ENCODE measurements at regions of chr9 and their contacts with region 1.

Region 1: DNA sequence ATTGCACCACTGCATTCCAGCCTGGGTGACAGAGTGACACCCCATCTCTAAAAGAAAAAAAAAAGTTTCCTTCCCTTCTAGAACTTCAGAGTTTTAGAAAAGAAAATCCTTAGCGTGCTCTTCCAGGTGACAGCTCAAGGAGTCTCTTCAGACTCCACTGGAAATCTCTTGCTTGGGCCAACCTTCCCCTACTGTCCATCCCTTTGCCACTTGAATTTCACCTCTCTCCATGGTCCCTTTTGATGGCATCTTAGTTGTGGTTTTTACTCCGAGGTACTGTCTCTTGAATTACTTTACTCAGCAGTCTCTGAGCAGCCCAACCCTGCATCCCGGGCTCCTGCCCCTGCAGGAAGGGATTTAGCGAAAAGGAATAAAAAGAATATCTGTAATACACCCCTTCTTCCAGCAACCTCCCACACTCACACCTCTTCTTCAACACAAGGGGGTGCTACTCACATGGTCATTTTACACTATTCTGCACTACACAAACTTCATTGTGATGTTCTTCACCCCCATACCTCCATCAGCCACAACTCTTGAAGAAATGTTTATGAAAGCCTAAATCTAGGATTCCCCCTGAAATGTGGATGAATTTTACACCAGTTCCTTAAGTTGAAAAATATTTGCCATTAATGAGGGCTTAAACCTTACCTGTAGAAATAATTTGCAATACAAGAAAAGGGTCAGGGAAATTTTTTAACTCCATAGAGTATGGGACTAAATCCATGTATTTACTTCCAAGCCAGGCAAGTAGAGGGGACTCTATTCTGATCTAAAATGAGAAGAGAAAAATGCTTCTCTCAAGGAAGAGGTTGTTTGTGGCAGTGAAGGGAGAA is 25.9 kb downstream of the TPD52L3 start:
- DNase-seq: peak; percentile 71
- CTCF ChIP-seq: peak; percentile 76

Region 2: DNA sequence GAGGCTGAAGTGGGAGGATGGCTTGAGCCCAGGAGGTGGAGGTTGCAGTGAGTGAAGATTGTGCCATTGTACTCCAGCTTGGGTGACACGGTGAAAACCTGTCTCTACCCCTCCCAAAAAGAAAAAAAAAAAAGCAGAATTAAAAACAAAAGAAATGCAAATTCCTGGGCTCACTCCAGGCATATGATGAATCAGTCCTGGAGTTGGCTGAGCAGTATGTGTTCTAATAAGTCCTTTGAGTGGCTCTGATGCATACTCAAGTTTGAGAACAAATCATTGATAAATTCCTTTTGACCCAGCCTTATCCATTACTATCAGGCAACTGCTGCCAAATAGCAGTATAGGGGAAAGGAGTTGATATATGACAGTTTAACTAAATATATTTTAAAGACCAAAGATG is 87.2 kb after region 1 on chr9:
- in situ Hi-C with region 1: no loop called
- DNase-seq: no peak
- CTCF ChIP-seq: no peak

Region 3: GRCh38 chr9:6575324-6576034 is 221.4 kb after region 1 on chr9:
- in situ Hi-C with region 1: loop called (anchors 10 kb)
- DNase-seq: peak; percentile 47
- CTCF ChIP-seq: no peak

Measured in GM13977 (cell line).